ENCODE measurements at regions of chr17 and their contacts with region 1.

Region 1: DNA sequence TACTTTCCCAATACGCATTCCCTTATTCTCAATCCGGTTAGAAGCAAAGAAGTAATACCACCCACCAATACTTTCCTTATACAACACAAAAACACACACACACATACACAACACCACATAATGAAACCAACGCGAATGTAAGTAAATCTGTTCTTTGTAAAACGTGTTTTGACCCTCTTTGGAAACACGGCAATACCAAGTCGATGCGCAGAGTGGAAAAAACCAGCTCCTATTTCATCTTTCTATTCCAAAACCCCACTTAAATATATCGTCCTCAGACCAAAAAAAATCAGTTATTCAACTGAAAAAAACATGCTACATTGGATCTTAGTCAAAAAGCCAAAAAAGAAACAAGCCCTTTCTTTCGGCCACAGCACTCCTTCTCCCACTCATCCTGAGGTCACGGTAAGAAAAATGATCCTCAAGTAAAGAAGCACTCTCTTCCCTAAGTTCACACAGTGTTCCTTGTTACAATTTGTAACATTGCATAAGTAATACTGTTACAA is 31.0 kb upstream of the ARL4D start:
- DNase-seq: peak; percentile 91
- ATAC-seq: peak; percentile 37
- H3K4me3 ChIP-seq: peak overlapping the region; percentile 43 to 73 (median 58); a peak in 4 of 6 replicates
- H3K27ac ChIP-seq: peak overlapping the region; percentile 95
- H3K4me1 ChIP-seq: peaks cover 73% of the 10 kb centered on the region
- H3K27me3 ChIP-seq: no peaks in the 10 kb centered on the region; a peak in 1 of 5 replicates
- CTCF ChIP-seq: no peak
- EP300 ChIP-seq: peak in 1 of 2 experiments; percentile 65; a peak in 2 of 4 replicates
- POLR2A ChIP-seq: peak; percentile 98 to 100
- RAD21 ChIP-seq: peak; percentile 59; the same call in 1 of the 2 replicates

Region 2: DNA sequence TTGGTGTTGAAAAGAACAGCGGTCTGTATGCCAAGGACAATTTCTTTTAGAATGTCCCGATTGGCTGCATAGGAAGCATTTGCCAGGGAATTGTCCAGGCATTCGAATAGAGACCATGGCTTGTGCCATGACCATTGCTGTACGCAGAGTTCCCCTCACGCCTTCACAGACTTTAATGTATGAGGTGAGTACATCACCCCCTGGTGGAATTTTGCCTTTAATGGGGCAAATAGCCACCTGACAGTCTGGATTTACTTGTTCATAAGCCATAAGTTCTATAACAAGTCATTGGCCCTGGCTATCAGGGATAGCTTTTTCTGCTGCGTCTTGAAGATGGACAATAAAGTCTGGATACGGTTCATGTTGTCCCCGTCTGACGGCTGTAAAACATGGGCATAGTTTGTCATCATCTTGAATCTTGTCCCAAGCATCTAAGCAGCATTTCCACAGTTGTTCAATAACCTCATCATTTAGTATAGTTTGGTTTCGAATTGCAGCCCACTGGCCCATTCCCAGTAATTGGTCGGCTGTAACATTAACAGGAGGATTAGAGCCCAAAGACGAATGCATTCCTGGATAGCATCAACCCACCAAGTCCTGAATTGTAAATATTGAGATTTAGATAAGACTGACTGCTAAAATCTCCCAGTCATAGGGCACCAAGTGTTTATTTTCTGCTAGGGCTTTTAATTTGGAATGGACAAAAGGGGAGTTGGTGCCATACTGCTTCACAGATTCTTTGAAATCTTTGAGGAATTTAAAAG is 36.7 kb before region 1 on chr17:
- CTCF ChIA-PET with region 1: no interaction called
- POLR2A ChIA-PET with region 1: interaction called, 46 read pairs
- in situ Hi-C with region 1: no loop called
- intact Hi-C with region 1: no loop called
- DNase-seq: no peak
- ATAC-seq: no peak
- H3K4me3 ChIP-seq: no peak overlapping the region
- H3K27ac ChIP-seq: no peak overlapping the region
- H3K4me1 ChIP-seq: peaks cover 42% of the 10 kb centered on the region
- H3K27me3 ChIP-seq: no peaks in the 10 kb centered on the region
- CTCF ChIP-seq: peak; percentile 39
- EP300 ChIP-seq: no peak
- POLR2A ChIP-seq: no peak
- RAD21 ChIP-seq: no peak

Region 3: GRCh38 chr17:43400943-43401692 is 33.3 kb after region 1 on chr17:
- CTCF ChIA-PET with region 1: no interaction called
- POLR2A ChIA-PET with region 1: interaction called, 130 read pairs
- in situ Hi-C with region 1: no loop called
- intact Hi-C with region 1: no loop called
- DNase-seq: no peak
- ATAC-seq: no peak
- H3K4me3 ChIP-seq: peak overlapping the region in 2 of 3 experiments; percentile 27 to 77; a peak in 2 of 6 replicates
- H3K27ac ChIP-seq: no peak overlapping the region
- H3K4me1 ChIP-seq: peaks cover 68% of the 10 kb centered on the region
- H3K27me3 ChIP-seq: no peaks in the 10 kb centered on the region; a peak in 1 of 5 replicates
- CTCF ChIP-seq: no peak
- EP300 ChIP-seq: no peak
- POLR2A ChIP-seq: no peak
- RAD21 ChIP-seq: no peak

Region 4: GRCh38 chr17:43456661-43457361 is 89.0 kb after region 1 on chr17:
- CTCF ChIA-PET with region 1: no interaction called
- POLR2A ChIA-PET with region 1: interaction called, 56 read pairs
- in situ Hi-C with region 1: no loop called
- intact Hi-C with region 1: no loop called
- DNase-seq: peak; percentile 100
- ATAC-seq: peak; percentile 95
- H3K4me3 ChIP-seq: peak overlapping the region in 1 of 3 experiments; percentile 17; a peak in 1 of 6 replicates
- H3K27ac ChIP-seq: peak overlapping the region; percentile 83
- H3K4me1 ChIP-seq: peaks cover 79% of the 10 kb centered on the region
- H3K27me3 ChIP-seq: no peaks in the 10 kb centered on the region
- CTCF ChIP-seq: peak; percentile 37
- EP300 ChIP-seq: peak; percentile 79 to 99; a peak in 3 of 4 replicates
- POLR2A ChIP-seq: peak; percentile 60 to 68
- RAD21 ChIP-seq: peak; percentile 57; the same call in 1 of the 2 replicates

Region 5: GRCh38 chr17:43524945-43525575 is 157.3 kb after region 1 on chr17:
- CTCF ChIA-PET with region 1: no interaction called
- POLR2A ChIA-PET with region 1: interaction called, 26 read pairs
- in situ Hi-C with region 1: no loop called
- intact Hi-C with region 1: no loop called
- DNase-seq: no peak
- ATAC-seq: peak; percentile 1
- H3K4me3 ChIP-seq: no peak overlapping the region
- H3K27ac ChIP-seq: peak overlapping the region; percentile 96
- H3K4me1 ChIP-seq: peaks cover 68% of the 10 kb centered on the region
- H3K27me3 ChIP-seq: no peaks in the 10 kb centered on the region
- CTCF ChIP-seq: no peak
- EP300 ChIP-seq: no peak
- POLR2A ChIP-seq: no peak
- RAD21 ChIP-seq: no peak

Region 6: GRCh38 chr17:43556292-43556691 is 188.5 kb after region 1 on chr17:
- CTCF ChIA-PET with region 1: no interaction called
- POLR2A ChIA-PET with region 1: interaction called, 10 read pairs
- in situ Hi-C with region 1: no loop called
- intact Hi-C with region 1: no loop called
- DNase-seq: no peak
- ATAC-seq: no peak
- H3K4me3 ChIP-seq: no peak overlapping the region
- H3K27ac ChIP-seq: peak overlapping the region; percentile 45
- H3K4me1 ChIP-seq: peaks cover 100% of the 10 kb centered on the region
- H3K27me3 ChIP-seq: no peaks in the 10 kb centered on the region
- CTCF ChIP-seq: no peak
- EP300 ChIP-seq: no peak
- POLR2A ChIP-seq: no peak
- RAD21 ChIP-seq: no peak

Region 7: DNA sequence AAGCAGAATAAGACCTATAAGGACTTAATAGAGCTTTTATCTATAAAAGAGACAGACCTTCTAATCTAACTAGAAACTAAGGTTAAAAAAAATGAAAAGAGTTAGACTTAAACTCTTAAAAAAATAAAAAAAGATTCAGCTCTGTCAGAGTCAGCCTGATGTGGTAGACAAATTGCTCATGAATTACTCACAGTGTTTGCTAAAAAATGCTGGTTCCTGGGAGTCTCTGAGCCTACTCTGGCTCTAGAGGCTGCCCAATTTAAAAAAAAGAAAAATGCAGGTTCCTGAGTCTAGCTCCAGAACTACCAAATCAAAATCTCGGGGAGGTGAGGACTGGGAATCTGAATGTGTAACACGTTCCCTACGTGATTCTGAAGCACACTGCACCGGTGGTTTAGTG is 372.8 kb after region 1 on chr17:
- CTCF ChIA-PET with region 1: no interaction called
- POLR2A ChIA-PET with region 1: no interaction called
- in situ Hi-C with region 1: no loop called
- intact Hi-C with region 1: no loop called
- DNase-seq: no peak
- ATAC-seq: no peak
- H3K4me3 ChIP-seq: no peak overlapping the region
- H3K27ac ChIP-seq: no peak overlapping the region
- H3K4me1 ChIP-seq: no peaks in the 10 kb centered on the region
- H3K27me3 ChIP-seq: peaks cover 5 to 48% of the 10 kb centered on the region in 2 experiments; a peak in 3 of 5 replicates
- CTCF ChIP-seq: no peak
- EP300 ChIP-seq: no peak
- POLR2A ChIP-seq: no peak
- RAD21 ChIP-seq: no peak